GM12878 (cell line): ENCODE measurements at regions of chr2 and their contacts with region 1.

Region 1: DNA sequence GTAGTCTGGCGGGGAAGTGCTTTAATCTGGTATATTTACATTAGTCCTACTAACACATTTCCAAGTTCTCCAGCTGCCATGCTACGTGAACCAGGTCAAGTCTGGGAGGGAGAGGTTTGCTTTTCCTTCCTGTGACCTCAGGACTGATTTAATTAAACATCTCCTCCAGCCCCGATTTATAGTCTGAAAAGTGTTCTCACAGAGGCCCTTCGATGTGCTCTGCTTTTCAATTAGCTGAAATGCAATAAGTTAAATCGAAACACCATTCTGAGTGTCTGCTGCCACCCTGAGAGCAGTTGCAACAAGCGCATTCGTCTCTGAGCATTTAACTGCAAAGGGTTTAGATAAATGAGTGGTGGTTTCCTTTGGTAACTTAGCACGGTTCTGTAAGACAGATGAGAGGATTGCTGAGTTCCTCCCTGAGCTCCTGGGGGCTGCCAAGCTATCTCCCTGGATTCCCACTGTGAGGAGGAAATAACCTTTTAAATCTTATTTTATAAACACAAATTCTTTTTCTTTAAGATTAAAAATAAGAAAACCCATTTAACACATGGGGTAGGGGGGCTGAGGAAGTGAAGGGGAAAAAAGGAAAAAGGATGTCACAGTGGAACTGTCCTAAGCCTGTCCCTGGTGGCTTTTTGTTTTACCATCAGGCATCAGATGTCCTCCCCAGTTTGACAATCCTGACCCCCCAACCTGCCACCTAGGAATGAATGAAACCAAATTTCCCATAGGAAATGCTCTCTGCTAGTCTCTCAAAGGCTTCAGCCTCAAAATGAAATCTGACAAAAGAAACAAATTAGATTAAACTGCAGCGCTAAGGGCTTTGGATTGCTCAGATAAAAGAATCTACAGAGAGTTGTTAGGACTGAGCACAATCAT is 56.5 kb upstream of the CREB1 start:
- DNase-seq: peak; percentile 30
- ATAC-seq: peak; percentile 84
- H3K4me3 ChIP-seq: no peak overlapping the region
- H3K27ac ChIP-seq: no peak overlapping the region
- H3K4me1 ChIP-seq: no peaks in the 10 kb centered on the region
- H3K27me3 ChIP-seq: no peaks in the 10 kb centered on the region
- CTCF ChIP-seq: peak; percentile 49 to 84 (median 67); a peak in 5 of 6 replicates
- EP300 ChIP-seq: no peak
- POLR2A ChIP-seq: no peak
- RAD21 ChIP-seq: peak; percentile 98

Region 2: DNA sequence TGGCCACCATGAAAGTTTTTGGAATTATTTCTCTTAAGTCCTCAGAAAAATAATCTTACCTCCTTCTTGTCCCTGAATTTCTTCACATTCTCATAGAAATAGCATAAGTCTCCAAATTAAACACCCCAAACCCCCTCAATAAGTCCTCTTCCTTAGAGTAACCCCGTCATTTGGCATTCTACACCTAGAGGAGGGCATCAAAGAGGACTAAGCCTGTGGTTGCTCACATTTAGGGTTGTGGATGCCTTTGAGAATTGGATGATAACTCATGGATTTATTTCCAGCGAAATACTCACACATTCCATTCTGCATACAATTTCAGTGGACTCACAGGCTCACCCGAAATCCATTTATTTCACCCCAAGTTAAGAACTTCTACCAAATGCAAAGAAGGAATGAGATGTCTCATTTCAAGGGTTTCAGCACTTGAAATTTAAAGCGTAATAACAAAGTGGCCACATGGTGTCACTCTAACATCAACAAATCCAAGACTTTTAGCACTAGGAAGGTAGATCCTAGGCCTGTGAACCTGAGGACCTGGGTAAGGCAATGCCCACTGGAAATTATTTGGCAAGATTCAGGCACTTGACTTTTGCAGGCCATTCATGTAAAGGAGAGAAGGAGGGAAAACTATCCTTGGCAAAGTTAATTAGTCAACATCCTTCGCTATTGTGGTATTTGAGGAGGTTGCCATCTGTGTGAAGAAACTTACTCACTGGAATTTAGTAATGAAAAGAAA is 779.7 kb before region 1 on chr2:
- CTCF ChIA-PET with region 1: interaction called, 22 read pairs
- POLR2A ChIA-PET with region 1: no interaction called
- RAD21 ChIA-PET with region 1: interaction called, 10 read pairs
- SMC1A ChIA-PET with region 1: no interaction called
- in situ Hi-C with region 1: loop called (anchors 5 kb)
- intact Hi-C with region 1: loop called (anchors 1 kb)
- DNase-seq: peak; percentile 24
- ATAC-seq: peak; percentile 84
- H3K4me3 ChIP-seq: no peak overlapping the region
- H3K27ac ChIP-seq: no peak overlapping the region
- H3K4me1 ChIP-seq: no peaks in the 10 kb centered on the region
- H3K27me3 ChIP-seq: no peaks in the 10 kb centered on the region
- CTCF ChIP-seq: peak; percentile 41 to 77 (median 61); a peak in 5 of 6 replicates
- EP300 ChIP-seq: no peak
- POLR2A ChIP-seq: no peak
- RAD21 ChIP-seq: peak; percentile 94

Region 3: GRCh38 chr2:206981739-206982340 is 491.4 kb before region 1 on chr2:
- CTCF ChIA-PET with region 1: interaction called, 21 read pairs
- POLR2A ChIA-PET with region 1: no interaction called
- RAD21 ChIA-PET with region 1: interaction called, 3 read pairs
- SMC1A ChIA-PET with region 1: interaction called, 4 read pairs
- in situ Hi-C with region 1: loop called (anchors 5 kb)
- intact Hi-C with region 1: loop called (anchors 1 kb)
- DNase-seq: no peak
- ATAC-seq: peak; percentile 66
- H3K4me3 ChIP-seq: no peak overlapping the region
- H3K27ac ChIP-seq: no peak overlapping the region
- H3K4me1 ChIP-seq: no peaks in the 10 kb centered on the region
- H3K27me3 ChIP-seq: no peaks in the 10 kb centered on the region
- CTCF ChIP-seq: peak; percentile 41 to 68 (median 43); a peak in 5 of 6 replicates
- EP300 ChIP-seq: no peak
- POLR2A ChIP-seq: no peak
- RAD21 ChIP-seq: peak; percentile 78

Region 4: GRCh38 chr2:207143215-207144172 is 329.8 kb before region 1 on chr2:
- CTCF ChIA-PET with region 1: interaction called, 27 read pairs
- POLR2A ChIA-PET with region 1: no interaction called
- RAD21 ChIA-PET with region 1: interaction called, 22 read pairs
- SMC1A ChIA-PET with region 1: interaction called, 13 read pairs
- in situ Hi-C with region 1: loop called (anchors 5 kb)
- intact Hi-C with region 1: loop called (anchors 5 kb)
- DNase-seq: no peak
- ATAC-seq: peak; percentile 72
- H3K4me3 ChIP-seq: peak overlapping the region; percentile 29
- H3K27ac ChIP-seq: peak overlapping the region; percentile 77
- H3K4me1 ChIP-seq: peaks cover 20% of the 10 kb centered on the region
- H3K27me3 ChIP-seq: no peaks in the 10 kb centered on the region
- CTCF ChIP-seq: no peak
- EP300 ChIP-seq: no peak
- POLR2A ChIP-seq: no peak
- RAD21 ChIP-seq: no peak

Region 5: DNA sequence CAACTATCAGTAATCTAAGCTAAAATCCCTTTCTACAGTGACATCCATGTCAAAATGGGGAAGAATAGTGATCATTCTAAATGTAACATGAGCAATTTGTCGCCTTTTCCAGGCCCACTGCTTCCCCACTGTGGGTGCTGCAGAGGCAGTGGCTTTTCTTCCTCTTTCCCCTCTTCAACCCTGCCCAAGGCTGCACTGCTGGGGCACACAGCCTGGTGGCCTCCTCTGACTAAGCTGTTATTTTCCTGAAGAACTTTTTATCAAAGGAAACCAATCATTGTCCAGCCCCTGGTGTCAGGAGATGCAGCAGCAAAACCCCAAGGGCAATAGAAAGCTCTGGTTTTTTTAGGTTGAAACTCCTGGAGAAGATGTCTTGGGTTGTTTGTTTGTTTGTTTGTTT is 189.9 kb before region 1 on chr2:
- CTCF ChIA-PET with region 1: interaction called, 5 read pairs
- POLR2A ChIA-PET with region 1: interaction called, 3 read pairs
- RAD21 ChIA-PET with region 1: interaction called, 3 read pairs
- SMC1A ChIA-PET with region 1: interaction called, 12 read pairs
- in situ Hi-C with region 1: no loop called
- intact Hi-C with region 1: no loop called
- DNase-seq: no peak
- ATAC-seq: peak; percentile 57
- H3K4me3 ChIP-seq: no peak overlapping the region
- H3K27ac ChIP-seq: peak overlapping the region; percentile 36; the same call in 1 of the 2 replicates
- H3K4me1 ChIP-seq: peaks cover 27% of the 10 kb centered on the region
- H3K27me3 ChIP-seq: no peaks in the 10 kb centered on the region
- CTCF ChIP-seq: peak in 1 of 3 experiments; percentile 2; a peak in 1 of 6 replicates
- EP300 ChIP-seq: no peak
- POLR2A ChIP-seq: no peak
- RAD21 ChIP-seq: 0 out of 2 replicates have a peak, but pooled peaks have one; percentile 25